ENCODE measurements at regions of chr11 and their contacts with region 1.

Region 1: DNA sequence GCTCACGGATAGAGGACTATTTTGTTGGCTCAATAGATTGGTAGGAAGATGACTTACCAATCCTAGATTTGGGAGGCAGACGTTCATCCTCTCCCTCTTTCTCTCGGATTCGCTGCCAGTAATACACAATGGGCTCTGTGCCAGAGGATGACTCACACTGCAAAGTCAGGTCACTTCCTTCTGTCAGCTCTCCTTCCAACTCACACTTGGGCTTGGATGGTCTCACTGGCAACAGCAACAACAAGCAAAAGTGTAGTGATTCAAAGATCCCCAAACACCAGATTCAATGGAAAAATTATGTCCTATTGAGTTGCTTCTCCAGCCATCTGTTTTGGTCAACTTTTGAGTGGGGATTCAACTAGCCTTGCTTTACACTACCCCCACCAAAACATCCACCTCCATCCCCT is 21.7 kb upstream of the HSPA8 start:
- DNase-seq: peak; percentile 89
- ATAC-seq: peak; percentile 35
- H3K4me3 Mint-ChIP-seq: peak overlapping the region; percentile 34
- H3K27ac Mint-ChIP-seq: peak overlapping the region; percentile 81
- H3K4me1 Mint-ChIP-seq: peaks cover 61% of the 10 kb centered on the region
- H3K27me3 Mint-ChIP-seq: no peaks in the 10 kb centered on the region

Region 2: GRCh38 chr11:123069908-123070821 is 13.5 kb before region 1 on chr11:
- CTCF ChIA-PET with region 1: interaction called, 13 read pairs
- POLR2A ChIA-PET with region 1: interaction called, 4 read pairs
- intact Hi-C with region 1: loop called (anchors 1 kb)
- DNase-seq: no peak
- ATAC-seq: peak; percentile 79
- H3K4me3 Mint-ChIP-seq: peak overlapping the region; percentile 77
- H3K27ac Mint-ChIP-seq: peak overlapping the region; percentile 94
- H3K4me1 Mint-ChIP-seq: peaks cover 59% of the 10 kb centered on the region
- H3K27me3 Mint-ChIP-seq: no peaks in the 10 kb centered on the region

Region 3: GRCh38 chr11:123103326-123103980 is 19.8 kb after region 1 on chr11:
- CTCF ChIA-PET with region 1: interaction called, 23 read pairs
- POLR2A ChIA-PET with region 1: interaction called, 3 read pairs
- intact Hi-C with region 1: no loop called
- DNase-seq: peak; percentile 46
- ATAC-seq: peak; percentile 77
- H3K4me3 Mint-ChIP-seq: no peak overlapping the region
- H3K27ac Mint-ChIP-seq: no peak overlapping the region
- H3K4me1 Mint-ChIP-seq: peaks cover 24% of the 10 kb centered on the region
- H3K27me3 Mint-ChIP-seq: no peaks in the 10 kb centered on the region

Region 4: DNA sequence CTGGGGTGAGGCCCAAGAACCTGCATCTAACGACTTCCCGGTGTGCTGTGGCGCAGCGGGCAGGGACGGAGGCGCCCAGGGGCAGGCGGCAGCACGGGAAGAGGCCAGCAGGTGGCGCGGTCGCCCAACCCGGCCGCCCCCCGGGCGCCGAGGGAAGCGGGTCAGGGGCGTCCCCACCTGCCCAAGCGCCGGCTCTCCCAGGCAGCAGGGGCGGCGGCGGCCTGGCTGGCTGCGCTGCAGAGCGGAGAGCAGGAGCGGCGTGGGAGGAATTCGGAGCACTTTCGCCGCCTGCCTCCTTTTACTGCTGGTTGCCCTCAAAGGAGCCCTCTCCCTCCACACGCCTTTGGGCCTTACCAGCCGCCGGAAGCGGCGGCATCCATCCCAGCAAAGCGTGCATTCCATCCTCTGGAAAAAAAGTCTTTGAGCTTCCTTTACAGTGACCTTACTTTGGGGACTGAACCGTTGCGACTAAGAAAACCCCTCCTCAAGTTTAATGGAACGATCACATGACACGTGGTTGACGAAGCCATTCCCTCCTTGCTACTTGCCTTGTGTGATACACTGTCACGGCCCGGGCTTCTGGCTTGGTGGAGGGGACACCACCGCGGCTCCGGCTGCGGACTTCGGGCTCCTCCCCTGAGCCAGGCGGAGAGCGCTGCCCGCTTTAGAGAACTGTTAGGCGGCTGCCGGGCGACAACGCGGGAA is 218.2 kb after region 1 on chr11:
- CTCF ChIA-PET with region 1: no interaction called
- POLR2A ChIA-PET with region 1: no interaction called
- intact Hi-C with region 1: no loop called
- DNase-seq: peak; percentile 90
- ATAC-seq: peak; percentile 75
- H3K4me3 Mint-ChIP-seq: peak overlapping the region; percentile 50
- H3K27ac Mint-ChIP-seq: peak overlapping the region; percentile 80
- H3K4me1 Mint-ChIP-seq: peaks cover 43% of the 10 kb centered on the region
- H3K27me3 Mint-ChIP-seq: no peaks in the 10 kb centered on the region